ENCODE measurements at regions of chr12 and their contacts with region 1.

Region 1: DNA sequence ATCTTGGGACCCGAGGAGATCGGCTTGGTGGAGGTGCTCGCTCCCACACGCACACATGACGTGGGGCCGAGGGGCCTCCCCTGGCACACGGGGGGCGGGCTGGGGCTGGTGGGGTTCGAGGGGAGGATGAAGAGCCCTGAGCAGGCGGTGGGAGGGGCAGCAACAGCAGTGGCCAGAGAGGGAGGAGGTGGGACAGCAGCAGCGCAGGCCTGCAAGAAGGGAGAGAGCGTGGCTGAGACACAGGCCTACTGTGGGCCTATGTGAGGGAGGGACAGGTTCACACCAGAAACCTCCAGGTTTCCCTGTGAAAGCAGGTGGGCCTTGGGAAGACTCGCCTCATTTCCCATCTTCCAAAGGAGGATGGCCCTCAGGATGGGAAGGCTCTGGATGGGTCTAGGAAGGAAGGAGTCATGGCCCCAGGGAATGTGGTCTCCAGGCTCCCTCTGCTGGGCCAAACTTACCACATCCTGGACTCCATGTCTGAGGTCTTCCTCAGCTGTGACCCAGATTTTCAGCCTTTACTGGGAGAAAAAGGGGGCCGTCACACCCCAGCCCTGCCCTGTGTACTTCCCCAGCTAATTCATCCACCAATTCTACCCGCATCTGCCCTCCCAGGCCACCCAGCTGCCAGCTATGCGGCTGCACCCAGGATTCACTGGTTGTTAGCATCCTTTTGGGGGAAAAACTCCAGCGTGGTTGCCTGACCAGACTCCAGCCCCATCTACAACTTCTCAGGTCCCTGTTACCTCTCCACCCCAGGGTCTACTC is 2.8 kb downstream of the PIANP start:
- DNase-seq: peak; percentile 64
- H3K4me3 ChIP-seq: peak overlapping the region; percentile 69
- H3K27ac ChIP-seq: peak overlapping the region; percentile 96
- H3K4me1 ChIP-seq: peaks cover 74% of the 10 kb centered on the region
- CTCF ChIP-seq: peak; percentile 82

Region 2: GRCh38 chr12:6363611-6364328 is 334.0 kb before region 1 on chr12:
- CTCF ChIA-PET with region 1: no interaction called
- POLR2A ChIA-PET with region 1: no interaction called
- intact Hi-C with region 1: no loop called
- DNase-seq: no peak
- H3K4me3 ChIP-seq: peak overlapping the region; percentile 66
- H3K27ac ChIP-seq: no peak overlapping the region
- H3K4me1 ChIP-seq: peaks cover 66% of the 10 kb centered on the region
- CTCF ChIP-seq: no peak

Region 3: GRCh38 chr12:6423267-6424007 is 274.3 kb before region 1 on chr12:
- CTCF ChIA-PET with region 1: no interaction called
- POLR2A ChIA-PET with region 1: no interaction called
- intact Hi-C with region 1: loop called (anchors 10 kb)
- DNase-seq: peak; percentile 92
- H3K4me3 ChIP-seq: no peak overlapping the region
- H3K27ac ChIP-seq: peak overlapping the region; percentile 1
- H3K4me1 ChIP-seq: peaks cover 53% of the 10 kb centered on the region
- CTCF ChIP-seq: peak; percentile 93

Region 4: GRCh38 chr12:6524648-6525047 is 173.1 kb before region 1 on chr12:
- CTCF ChIA-PET with region 1: no interaction called
- POLR2A ChIA-PET with region 1: no interaction called
- intact Hi-C with region 1: no loop called
- DNase-seq: no peak
- H3K4me3 ChIP-seq: no peak overlapping the region
- H3K27ac ChIP-seq: no peak overlapping the region
- H3K4me1 ChIP-seq: no peaks in the 10 kb centered on the region
- CTCF ChIP-seq: no peak

Region 5: GRCh38 chr12:6554168-6555017 is 143.4 kb before region 1 on chr12:
- CTCF ChIA-PET with region 1: no interaction called
- POLR2A ChIA-PET with region 1: no interaction called
- intact Hi-C with region 1: loop called (anchors 1 kb)
- DNase-seq: peak; percentile 91
- H3K4me3 ChIP-seq: peak overlapping the region; percentile 92
- H3K27ac ChIP-seq: peak overlapping the region; percentile 49
- H3K4me1 ChIP-seq: peaks cover 40% of the 10 kb centered on the region
- CTCF ChIP-seq: peak; percentile 81

Region 6: DNA sequence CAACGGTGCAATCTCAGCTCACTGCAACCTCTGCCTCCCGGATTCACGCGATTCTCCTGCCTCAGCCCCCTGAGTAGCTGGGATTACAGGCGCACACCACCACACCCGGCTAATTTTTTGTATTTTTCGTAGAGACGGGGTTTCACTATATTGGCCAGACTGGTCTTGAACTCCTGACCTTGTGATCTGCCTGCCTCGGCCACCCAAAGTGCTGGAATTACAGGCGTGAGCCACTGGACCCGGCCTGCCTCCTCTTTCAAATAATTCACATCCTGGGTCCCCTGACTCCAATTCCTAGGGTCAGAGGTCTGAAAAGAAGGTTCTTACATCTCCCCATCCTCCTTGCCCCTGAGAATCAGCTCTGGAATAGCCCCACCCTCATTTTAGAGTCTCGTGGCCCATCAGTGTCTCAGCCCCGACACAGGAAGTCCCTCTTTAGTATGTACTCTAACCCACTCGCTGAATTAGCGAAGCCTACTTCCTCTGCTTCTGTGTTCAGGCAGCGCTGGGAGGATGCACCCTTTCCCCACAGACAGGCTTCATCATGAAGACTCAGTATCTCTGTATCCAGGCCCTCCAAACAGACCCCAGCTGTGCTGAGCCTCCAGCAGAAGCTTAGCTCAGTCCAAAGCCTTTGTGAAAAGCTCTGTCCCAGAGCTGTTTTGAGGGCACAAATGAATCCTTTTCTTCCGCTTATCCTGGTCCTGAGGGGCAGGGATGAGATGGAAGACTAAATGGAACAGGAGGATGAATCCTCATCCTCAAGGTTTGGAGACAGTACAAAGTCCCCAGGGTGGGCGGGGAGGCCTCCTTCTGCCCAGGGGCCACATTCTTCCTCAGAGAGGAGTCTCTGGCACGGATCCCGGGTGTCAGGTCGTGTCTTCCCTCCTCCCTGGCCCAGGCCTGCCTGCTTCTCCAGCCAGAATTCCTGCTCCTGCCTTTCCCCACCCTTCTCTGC is 65.5 kb before region 1 on chr12:
- CTCF ChIA-PET with region 1: interaction called, 3 read pairs
- POLR2A ChIA-PET with region 1: interaction called, 12 read pairs
- intact Hi-C with region 1: no loop called
- DNase-seq: peak; percentile 96
- H3K4me3 ChIP-seq: peak overlapping the region; percentile 68
- H3K27ac ChIP-seq: peak overlapping the region; percentile 97
- H3K4me1 ChIP-seq: peaks cover 87% of the 10 kb centered on the region
- CTCF ChIP-seq: no peak

Region 7: DNA sequence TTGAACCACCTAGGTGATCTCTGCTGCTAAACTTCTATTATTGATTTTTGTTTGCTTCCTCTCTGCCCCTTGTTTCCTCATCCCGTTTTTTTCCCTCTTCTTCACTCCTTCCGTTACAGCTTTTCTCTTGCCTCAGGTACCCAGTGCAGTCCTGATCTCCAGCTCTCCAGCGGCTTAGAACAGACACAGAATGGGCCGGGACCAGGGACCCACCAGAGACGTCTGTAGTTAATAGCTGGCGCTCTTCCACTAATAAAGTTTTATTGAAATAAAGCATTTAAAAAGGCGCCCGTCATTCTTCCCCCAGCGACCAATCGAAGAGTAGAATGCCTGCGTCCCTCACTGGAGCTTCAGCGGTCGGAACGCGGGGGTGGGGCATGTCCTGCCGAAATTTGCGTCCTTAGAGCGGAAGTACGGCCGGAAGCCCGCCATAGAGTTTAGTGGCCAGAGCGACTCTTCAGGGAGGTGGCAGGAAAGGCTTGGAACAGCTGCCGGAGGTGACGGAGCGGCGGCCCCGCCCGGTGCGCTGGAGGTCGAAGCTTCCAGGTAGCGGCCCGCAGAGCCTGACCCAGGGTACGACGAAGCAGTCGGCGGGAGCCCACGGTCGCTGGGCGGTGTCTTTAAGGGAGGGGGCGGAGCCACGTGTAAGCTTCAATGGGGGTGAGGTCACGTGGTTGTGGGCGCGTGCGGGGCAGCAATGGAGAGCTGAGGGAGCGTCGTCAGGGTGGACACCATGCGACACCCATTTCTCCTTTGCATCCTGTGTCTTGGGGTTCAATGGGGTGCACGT is 26.0 kb after region 1 on chr12 and contains the start of gene COPS7A:
- CTCF ChIA-PET with region 1: interaction called, 9 read pairs
- POLR2A ChIA-PET with region 1: interaction called, 16 read pairs
- intact Hi-C with region 1: loop called (anchors 1 kb)
- DNase-seq: peak; percentile 100
- H3K4me3 ChIP-seq: peak within 1 kb of the TSS; percentile 76
- H3K27ac ChIP-seq: peak within 1 kb of the TSS; percentile 77
- H3K4me1 ChIP-seq: peaks cover 52% of the 10 kb centered on the region
- CTCF ChIP-seq: peak; percentile 25; the same call in 1 of the 2 replicates
- total RNA-seq, gene COPS7A: 64.8 and 71.2 TPM in 2 replicates

Region 8: GRCh38 chr12:6860116-6860515 is 162.3 kb after region 1 on chr12:
- CTCF ChIA-PET with region 1: interaction called, 14 read pairs
- POLR2A ChIA-PET with region 1: no interaction called
- intact Hi-C with region 1: no loop called
- DNase-seq: no peak
- H3K4me3 ChIP-seq: no peak overlapping the region
- H3K27ac ChIP-seq: no peak overlapping the region
- H3K4me1 ChIP-seq: no peaks in the 10 kb centered on the region
- CTCF ChIP-seq: no peak